Activated naive CD8-positive, alpha-beta T cell treated with anti-CD3 and anti-CD28 coated beads, Interleukin-2, amount 10 ng/mL, durations not matched to agents 7 days and 5 days (primary cell): ENCODE measurements at regions of chr1 and their contacts with region 1.

Region 1: GRCh38 chr1:146036965-146037646 is 15.6 kb upstream of the HJV start:
- DNase-seq: peak; percentile 79
- ATAC-seq: peak; percentile 45
- H3K4me3 Mint-ChIP-seq: peak overlapping the region; percentile 90
- H3K27ac Mint-ChIP-seq: peak overlapping the region; percentile 94
- H3K4me1 Mint-ChIP-seq: peaks cover 33% of the 10 kb centered on the region
- H3K27me3 Mint-ChIP-seq: peaks cover 11% of the 10 kb centered on the region

Region 2: GRCh38 chr1:145957443-145958319 is 79.4 kb before region 1 on chr1 and contains the start of gene LIX1L:
- POLR2A ChIA-PET with region 1: interaction called, 13 read pairs
- DNase-seq: peak; percentile 89
- ATAC-seq: peak; percentile 90
- H3K4me3 Mint-ChIP-seq: peak within 1 kb of the TSS; percentile 99
- H3K27ac Mint-ChIP-seq: peak within 1 kb of the TSS; percentile 94
- H3K4me1 Mint-ChIP-seq: peaks cover 66% of the 10 kb centered on the region
- H3K27me3 Mint-ChIP-seq: no peaks in the 10 kb centered on the region
- total RNA-seq, gene LIX1L: 54.0 to 57.5 TPM

Region 3: DNA sequence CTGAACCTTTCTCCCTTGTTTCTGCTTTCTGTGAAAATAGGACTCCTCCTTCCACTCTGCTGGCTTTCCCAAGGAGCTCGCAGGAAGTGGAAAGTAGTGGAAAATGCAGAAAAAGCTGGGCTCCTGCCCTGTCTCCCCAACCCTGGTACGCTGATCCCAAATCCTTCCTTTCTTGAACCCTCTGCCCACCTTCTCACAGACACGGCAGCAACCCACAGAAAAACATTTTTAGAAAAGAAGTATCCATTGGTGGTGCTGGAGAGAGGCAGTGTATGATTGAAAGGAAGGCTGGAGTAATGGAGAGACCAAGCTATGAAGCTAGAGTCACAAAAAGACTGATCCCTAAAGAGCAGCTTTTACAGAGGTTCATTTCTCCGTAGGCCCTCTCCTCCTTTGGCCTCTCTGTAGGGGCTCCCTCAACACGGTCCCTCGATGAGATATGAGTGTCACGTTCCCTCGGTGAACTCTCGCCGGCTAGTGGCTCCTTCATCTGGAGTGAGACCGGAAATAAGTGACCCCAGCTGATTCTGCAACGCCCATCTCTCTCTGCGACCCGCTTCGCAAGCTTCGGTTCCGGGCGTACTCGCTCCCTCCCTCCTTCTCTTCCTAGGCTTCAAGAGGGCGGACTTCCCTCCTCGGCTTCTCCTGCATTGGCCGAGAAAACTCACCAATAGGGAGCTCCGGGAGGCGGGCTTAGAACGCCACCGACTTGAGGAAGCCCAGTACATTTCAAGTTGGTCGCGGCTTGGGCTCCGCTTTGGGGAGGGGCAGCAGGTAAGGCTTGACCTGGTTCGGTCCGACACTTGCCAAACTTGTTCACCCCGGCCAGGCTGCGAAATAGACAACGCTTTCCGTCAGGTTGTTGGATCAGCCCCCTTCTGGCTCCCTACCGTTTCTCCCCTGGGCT is 72.9 kb before region 1 on chr1 and contains the starts of genes ANKRD34A and POLR3GL:
- POLR2A ChIA-PET with region 1: interaction called, 20 read pairs
- DNase-seq: peak; percentile 85
- ATAC-seq: peak; percentile 89
- H3K4me3 Mint-ChIP-seq: peak within 1 kb of the TSS; percentile 94
- H3K27ac Mint-ChIP-seq: peak within 1 kb of the TSS; percentile 94
- H3K4me1 Mint-ChIP-seq: peaks cover 39% of the 10 kb centered on the region
- H3K27me3 Mint-ChIP-seq: no peaks in the 10 kb centered on the region
- total RNA-seq, gene ANKRD34A: 2.2 to 2.8 TPM
- total RNA-seq, gene POLR3GL: 32.6 to 34.9 TPM

Region 4: DNA sequence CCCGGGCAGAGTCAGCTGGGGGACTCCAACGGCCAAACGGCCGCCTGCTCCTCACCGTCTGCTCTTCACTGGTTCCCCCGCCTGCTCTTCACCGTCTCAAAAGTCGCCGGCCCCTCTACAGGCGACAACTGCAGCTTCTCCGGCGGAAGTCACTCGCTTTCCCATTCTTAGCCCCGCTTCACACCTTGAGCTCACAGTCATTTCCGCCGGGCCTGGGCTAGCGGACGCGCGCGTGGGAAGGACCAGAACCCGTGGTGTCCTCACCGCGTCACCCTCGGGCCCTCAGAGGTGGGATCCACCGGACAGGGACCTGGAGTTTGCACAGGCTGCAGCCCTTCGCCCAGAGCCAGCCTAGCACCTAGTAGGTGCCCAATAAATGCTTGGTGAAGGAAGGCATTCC is 12.3 kb after region 1 on chr1:
- POLR2A ChIA-PET with region 1: interaction called, 132 read pairs
- DNase-seq: no peak
- ATAC-seq: no peak
- H3K4me3 Mint-ChIP-seq: no peak overlapping the region
- H3K27ac Mint-ChIP-seq: no peak overlapping the region
- H3K4me1 Mint-ChIP-seq: peaks cover 29% of the 10 kb centered on the region
- H3K27me3 Mint-ChIP-seq: no peaks in the 10 kb centered on the region